PC-9 (cell line): ENCODE measurements at regions of chr2 and their contacts with region 1.

Region 1: GRCh38 chr2:221372159-221372884 is 199.8 kb downstream of the EPHA4 start:
- DNase-seq: no peak
- H3K4me3 ChIP-seq: no peak overlapping the region
- H3K27ac ChIP-seq: no peak overlapping the region
- H3K4me1 ChIP-seq: no peaks in the 10 kb centered on the region
- H3K27me3 ChIP-seq: no peaks in the 10 kb centered on the region
- CTCF ChIP-seq: peak; percentile 77

Region 2: DNA sequence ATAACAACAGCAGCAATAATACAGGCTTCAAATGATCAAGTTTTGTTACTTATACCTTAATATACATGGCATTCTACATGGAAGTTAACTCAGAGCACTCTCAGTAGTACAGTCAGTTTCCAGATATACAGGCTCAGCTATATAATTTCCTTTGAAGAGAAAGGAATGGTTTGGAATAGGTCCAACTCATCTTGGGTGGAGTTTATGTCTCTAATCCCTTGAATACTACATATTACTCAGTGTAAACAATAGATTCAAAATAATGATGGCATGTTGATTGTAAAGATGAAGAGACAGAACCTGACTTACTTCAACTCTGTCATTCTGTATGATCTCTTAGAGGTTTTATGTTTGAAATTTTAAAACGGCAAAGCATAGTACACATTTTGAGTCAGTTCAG is 24.9 kb after region 1 on chr2:
- CTCF ChIA-PET with region 1: no interaction called
- POLR2A ChIA-PET with region 1: no interaction called
- intact Hi-C with region 1: loop called (anchors 2 kb)
- DNase-seq: peak in 1 of 2 experiments; percentile 89
- H3K4me3 ChIP-seq: no peak overlapping the region
- H3K27ac ChIP-seq: no peak overlapping the region
- H3K4me1 ChIP-seq: 0 out of 2 replicates have a peak, but pooled peaks cover 7% of the 10 kb centered on the region
- H3K27me3 ChIP-seq: no peaks in the 10 kb centered on the region
- CTCF ChIP-seq: no peak